Naive thymus-derived CD4-positive, alpha-beta T cell (primary cell): ENCODE measurements at regions of chr19 and their contacts with region 1.

Region 1: GRCh38 chr19:14347999-14348889 is 33.0 kb upstream of the ADGRE5 start:
- DNase-seq: peak; percentile 43 to 81 (median 59)
- ATAC-seq: peak; percentile 84
- H3K4me3 ChIP-seq: no peak overlapping the region
- H3K4me3 Mint-ChIP-seq: peak overlapping the region; percentile 19 to 82 (median 66)
- H3K27ac ChIP-seq: peak overlapping the region; percentile 38
- H3K27ac Mint-ChIP-seq: peak overlapping the region in 4 of 9 donors; percentile 51 to 80 (median 64)
- H3K4me1 ChIP-seq: peaks cover 8 to 12% of the 10 kb centered on the region in 2 donors
- H3K4me1 Mint-ChIP-seq: peaks cover 9 to 25% (median 19%) of the 10 kb centered on the region in 7 donors
- H3K27me3 ChIP-seq: no peaks in the 10 kb centered on the region
- H3K27me3 Mint-ChIP-seq: no peaks in the 10 kb centered on the region

Region 2: GRCh38 chr19:13082192-13083007 is 1265.8 kb before region 1 on chr19:
- CTCF ChIA-PET with region 1: no interaction called
- POLR2A ChIA-PET with region 1: no interaction called
- intact Hi-C with region 1: no loop called
- DNase-seq: no peak
- ATAC-seq: no peak
- H3K4me3 ChIP-seq: no peak overlapping the region
- H3K4me3 Mint-ChIP-seq: no peak overlapping the region
- H3K27ac ChIP-seq: no peak overlapping the region
- H3K27ac Mint-ChIP-seq: no peak overlapping the region
- H3K4me1 ChIP-seq: no peaks in the 10 kb centered on the region
- H3K4me1 Mint-ChIP-seq: peaks cover 0 to 5% (median 0%) of the 10 kb centered on the region in 7 donors
- H3K27me3 ChIP-seq: no peaks in the 10 kb centered on the region
- H3K27me3 Mint-ChIP-seq: peaks cover 0 to 7% (median 0%) of the 10 kb centered on the region in 5 donors

Region 3: DNA sequence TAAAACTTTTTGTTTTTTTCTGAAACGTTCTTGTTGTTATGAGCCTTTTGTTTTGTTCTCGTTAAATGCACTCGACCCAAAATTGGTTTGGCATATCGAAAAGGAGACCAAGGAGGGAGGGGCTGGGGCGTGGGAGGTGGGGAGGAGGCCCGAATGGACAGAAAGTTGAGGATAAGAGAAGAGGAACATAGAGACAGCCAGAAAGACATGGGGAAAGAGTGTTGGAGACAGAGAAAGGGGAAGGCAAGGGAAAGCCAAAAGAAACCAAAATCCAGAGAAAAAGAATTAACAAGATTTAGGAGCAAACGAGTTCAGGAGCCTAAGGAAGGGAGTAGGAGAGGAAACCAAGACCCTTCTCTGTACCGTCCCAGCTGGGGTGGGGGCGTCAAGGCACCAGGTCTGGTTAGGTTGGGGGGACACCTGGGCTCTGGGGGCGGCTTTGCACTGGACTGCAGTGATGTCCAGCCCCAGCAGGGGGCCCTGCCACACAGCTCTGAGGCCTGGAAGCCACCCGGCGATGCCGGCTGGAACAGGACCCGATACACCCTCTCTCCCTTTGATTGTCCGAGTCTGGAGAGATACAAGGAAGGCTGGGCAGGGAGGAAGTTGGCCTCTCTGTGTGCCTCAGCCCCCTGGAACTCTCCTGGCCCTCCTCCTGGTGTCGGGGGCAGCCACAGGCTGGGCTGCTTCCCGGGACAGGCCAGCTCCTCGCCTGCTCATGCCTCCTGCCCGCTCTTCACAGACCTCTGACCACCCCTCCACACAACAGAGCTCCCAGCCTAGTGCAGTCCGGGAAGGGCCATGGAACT is 200.2 kb before region 1 on chr19:
- CTCF ChIA-PET with region 1: interaction called, 9 read pairs
- POLR2A ChIA-PET with region 1: interaction called, 6 read pairs
- intact Hi-C with region 1: loop called in 1 of 2 experiments (anchors 1 kb)
- DNase-seq: peak in 7 of 9 donors; percentile 23 to 51 (median 38)
- ATAC-seq: peak; percentile 79
- H3K4me3 ChIP-seq: no peak overlapping the region
- H3K4me3 Mint-ChIP-seq: peak overlapping the region in 9 of 10 donors; percentile 57 to 95 (median 82)
- H3K27ac ChIP-seq: peak overlapping the region; percentile 91
- H3K27ac Mint-ChIP-seq: peak overlapping the region; percentile 92 to 99 (median 99)
- H3K4me1 ChIP-seq: peaks cover 23 to 30% of the 10 kb centered on the region in 2 donors
- H3K4me1 Mint-ChIP-seq: peaks cover 13 to 67% (median 44%) of the 10 kb centered on the region in 7 donors
- H3K27me3 ChIP-seq: no peaks in the 10 kb centered on the region
- H3K27me3 Mint-ChIP-seq: no peaks in the 10 kb centered on the region

Region 4: GRCh38 chr19:14198384-14199376 is 149.6 kb before region 1 on chr19:
- CTCF ChIA-PET with region 1: interaction called, 21 read pairs
- POLR2A ChIA-PET with region 1: interaction called, 5 read pairs
- intact Hi-C with region 1: loop called (anchors 1 kb)
- DNase-seq: no peak
- ATAC-seq: no peak
- H3K4me3 ChIP-seq: no peak overlapping the region
- H3K4me3 Mint-ChIP-seq: no peak overlapping the region
- H3K27ac ChIP-seq: no peak overlapping the region
- H3K27ac Mint-ChIP-seq: no peak overlapping the region
- H3K4me1 ChIP-seq: peaks cover 0 to 4% of the 10 kb centered on the region in 2 donors
- H3K4me1 Mint-ChIP-seq: peaks cover 19 to 45% (median 34%) of the 10 kb centered on the region in 7 donors
- H3K27me3 ChIP-seq: no peaks in the 10 kb centered on the region
- H3K27me3 Mint-ChIP-seq: peaks cover 0 to 11% (median 0%) of the 10 kb centered on the region in 5 donors

Region 5: DNA sequence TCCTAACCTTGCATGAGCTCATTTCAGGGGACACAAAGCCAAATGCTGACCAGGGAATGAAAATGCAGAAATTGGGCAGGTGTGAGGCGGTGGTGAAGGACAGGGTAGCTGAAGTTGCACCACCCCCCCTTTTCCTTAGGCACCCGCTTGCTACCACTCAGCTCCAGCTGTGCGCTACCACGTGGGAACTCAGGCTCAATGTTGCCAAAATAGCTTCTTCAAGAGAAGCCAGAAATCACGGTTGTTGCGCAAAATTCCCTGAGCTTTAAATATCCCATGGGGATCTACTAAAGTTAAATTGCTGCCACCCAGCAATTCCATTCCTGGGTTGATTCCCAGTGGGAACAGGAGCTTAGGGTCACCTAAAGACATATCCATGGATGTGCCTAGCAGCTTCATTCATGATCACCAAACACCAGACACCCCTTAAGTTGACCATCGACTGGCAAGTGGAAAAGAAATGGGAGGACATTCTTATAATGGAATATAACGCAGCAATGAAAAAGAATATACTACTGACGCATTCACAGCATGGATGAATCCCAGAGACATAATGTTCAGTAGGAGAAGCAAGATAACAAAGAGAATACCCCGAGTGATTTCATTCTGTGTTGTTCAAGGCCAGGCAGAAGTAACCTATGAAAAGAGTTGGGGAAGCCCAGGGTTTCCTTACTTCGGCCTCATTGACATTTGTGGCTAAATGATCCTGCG is 129.5 kb before region 1 on chr19:
- CTCF ChIA-PET with region 1: interaction called, 4 read pairs
- POLR2A ChIA-PET with region 1: no interaction called
- intact Hi-C with region 1: loop called in 1 of 2 experiments (anchors 2 kb)
- DNase-seq: no peak
- ATAC-seq: no peak
- H3K4me3 ChIP-seq: no peak overlapping the region
- H3K4me3 Mint-ChIP-seq: no peak overlapping the region
- H3K27ac ChIP-seq: no peak overlapping the region
- H3K27ac Mint-ChIP-seq: peak overlapping the region in 1 of 9 donors; percentile 29
- H3K4me1 ChIP-seq: no peaks in the 10 kb centered on the region
- H3K4me1 Mint-ChIP-seq: peaks cover 10 to 18% (median 14%) of the 10 kb centered on the region in 7 donors
- H3K27me3 ChIP-seq: no peaks in the 10 kb centered on the region
- H3K27me3 Mint-ChIP-seq: peaks cover 0 to 6% (median 0%) of the 10 kb centered on the region in 5 donors

Region 6: GRCh38 chr19:14383661-14384555 is 35.7 kb after region 1 on chr19:
- CTCF ChIA-PET with region 1: interaction called, 15 read pairs
- POLR2A ChIA-PET with region 1: interaction called, 433 read pairs
- intact Hi-C with region 1: no loop called
- DNase-seq: peak in 2 of 9 donors; percentile 69 to 81
- ATAC-seq: peak; percentile 4
- H3K4me3 ChIP-seq: peak overlapping the region; percentile 95
- H3K4me3 Mint-ChIP-seq: peak overlapping the region; percentile 89 to 100 (median 94)
- H3K27ac ChIP-seq: peak overlapping the region; percentile 98
- H3K27ac Mint-ChIP-seq: peak overlapping the region; percentile 96 to 99 (median 97)
- H3K4me1 ChIP-seq: peaks cover 24 to 28% of the 10 kb centered on the region in 2 donors
- H3K4me1 Mint-ChIP-seq: peaks cover 36 to 51% (median 47%) of the 10 kb centered on the region in 7 donors
- H3K27me3 ChIP-seq: no peaks in the 10 kb centered on the region
- H3K27me3 Mint-ChIP-seq: peaks cover 0 to 3% (median 0%) of the 10 kb centered on the region in 5 donors

Region 7: DNA sequence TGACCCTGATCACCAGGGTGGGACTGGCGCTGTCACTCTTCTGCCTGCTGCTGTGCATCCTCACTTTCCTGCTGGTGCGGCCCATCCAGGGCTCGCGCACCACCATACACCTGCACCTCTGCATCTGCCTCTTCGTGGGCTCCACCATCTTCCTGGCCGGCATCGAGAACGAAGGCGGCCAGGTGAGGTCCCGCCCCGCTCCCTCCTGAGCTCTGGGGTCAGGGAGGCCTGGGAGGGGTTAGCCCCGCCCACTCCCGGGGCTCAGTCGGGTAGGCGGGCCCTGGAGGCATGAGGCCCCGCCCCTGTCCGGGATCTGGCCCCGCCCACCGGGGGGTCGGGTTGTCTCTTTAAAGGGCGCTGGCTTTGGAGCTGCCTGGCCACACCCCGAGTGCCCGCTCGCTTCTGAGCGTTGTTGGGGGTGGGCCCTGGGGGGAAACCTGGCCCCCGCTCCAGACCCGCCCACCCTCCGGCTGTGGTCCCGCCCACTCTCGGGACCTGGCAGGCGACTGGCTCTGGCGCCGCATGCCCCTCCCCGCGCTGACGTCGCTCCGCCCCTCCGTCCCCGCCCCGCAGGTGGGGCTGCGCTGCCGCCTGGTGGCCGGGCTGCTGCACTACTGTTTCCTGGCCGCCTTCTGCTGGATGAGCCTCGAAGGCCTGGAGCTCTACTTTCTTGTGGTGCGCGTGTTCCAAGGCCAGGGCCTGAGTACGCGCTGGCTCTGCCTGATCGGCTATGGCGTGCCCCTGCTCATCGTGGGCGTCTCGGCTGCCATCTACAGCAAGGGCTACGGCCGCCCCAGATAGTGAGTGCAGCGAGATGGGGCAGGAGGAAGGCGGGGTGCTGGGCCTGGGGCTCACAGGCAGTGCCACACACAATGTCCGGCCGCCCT is 57.8 kb after region 1 on chr19:
- CTCF ChIA-PET with region 1: interaction called, 10 read pairs
- POLR2A ChIA-PET with region 1: interaction called, 5 read pairs
- intact Hi-C with region 1: no loop called
- DNase-seq: peak; percentile 85 to 96 (median 91)
- ATAC-seq: peak; percentile 76
- H3K4me3 ChIP-seq: no peak overlapping the region
- H3K4me3 Mint-ChIP-seq: peak overlapping the region in 1 of 10 donors; percentile 12
- H3K27ac ChIP-seq: peak overlapping the region; percentile 54
- H3K27ac Mint-ChIP-seq: peak overlapping the region; percentile 58 to 85 (median 60)
- H3K4me1 ChIP-seq: peaks cover 8 to 25% of the 10 kb centered on the region in 2 donors
- H3K4me1 Mint-ChIP-seq: peaks cover 6 to 26% (median 20%) of the 10 kb centered on the region in 7 donors
- H3K27me3 ChIP-seq: no peaks in the 10 kb centered on the region
- H3K27me3 Mint-ChIP-seq: no peaks in the 10 kb centered on the region